ENCODE measurements at regions of chr1 and their contacts with region 1.

Region 1: DNA sequence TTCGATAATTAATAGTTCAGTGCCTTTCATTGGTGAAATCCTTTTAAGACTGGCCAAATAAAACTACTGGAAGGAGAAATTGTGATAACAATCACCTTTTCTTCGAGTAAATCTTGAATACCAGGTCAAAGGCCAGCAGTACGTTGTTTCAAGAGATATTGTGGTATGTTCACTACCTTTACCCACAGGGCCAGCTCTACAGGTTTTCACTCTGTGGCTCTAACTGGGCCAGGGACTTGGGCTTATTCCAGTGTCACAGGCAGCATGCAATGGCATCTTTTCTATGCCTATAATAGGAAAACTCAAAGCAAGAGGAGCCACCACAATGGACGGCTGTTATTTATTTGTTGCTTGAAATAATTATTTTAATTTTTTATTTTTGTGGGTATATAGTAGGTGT is 26.8 kb upstream of the LRIF1 start:
- DNase-seq: no peak

Region 2: GRCh38 chr1:110944806-110945205 is 45.7 kb before region 1 on chr1:
- in situ Hi-C with region 1: loop called (anchors 5 kb)
- DNase-seq: no peak

Region 3: DNA sequence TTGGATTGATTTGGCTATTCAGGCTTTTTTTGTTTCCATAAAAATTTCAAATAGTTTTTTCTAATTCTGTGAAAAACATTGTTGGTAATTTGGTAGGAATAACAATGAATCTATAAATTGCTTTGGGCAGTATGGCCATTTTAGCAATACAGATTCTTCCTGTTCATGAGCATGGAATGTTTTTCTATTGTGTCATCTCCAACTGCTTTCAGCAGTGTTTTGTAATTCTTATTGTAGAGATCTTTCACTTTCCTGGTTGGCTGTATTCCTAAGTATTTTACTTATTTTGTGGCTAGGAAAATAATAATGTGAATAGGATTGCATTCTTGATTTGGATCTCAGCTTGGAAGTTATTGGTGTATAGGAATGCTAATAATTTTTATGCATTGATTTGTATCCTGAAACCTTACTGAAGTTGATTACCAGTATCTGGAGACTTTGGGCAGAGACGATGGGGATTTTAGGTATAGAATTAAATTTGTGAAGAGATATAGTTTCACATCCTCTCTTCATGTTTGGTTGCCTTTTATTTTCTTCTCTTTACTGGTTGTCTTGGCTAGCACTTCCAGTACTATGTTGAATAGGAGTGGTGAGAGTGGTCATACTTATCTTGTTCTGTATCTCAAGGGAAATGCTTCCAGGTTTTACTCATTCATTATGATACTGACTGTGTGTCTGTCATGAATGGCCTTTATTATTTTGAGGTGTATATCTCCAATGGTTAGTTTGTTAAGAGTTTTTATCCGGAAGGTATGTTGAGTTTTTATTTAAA is 92.1 kb after region 1 on chr1:
- in situ Hi-C with region 1: no loop called
- DNase-seq: no peak

Measured in G401 (cell line).